ENCODE measurements at regions of chrX and their contacts with region 1.

Region 1: DNA sequence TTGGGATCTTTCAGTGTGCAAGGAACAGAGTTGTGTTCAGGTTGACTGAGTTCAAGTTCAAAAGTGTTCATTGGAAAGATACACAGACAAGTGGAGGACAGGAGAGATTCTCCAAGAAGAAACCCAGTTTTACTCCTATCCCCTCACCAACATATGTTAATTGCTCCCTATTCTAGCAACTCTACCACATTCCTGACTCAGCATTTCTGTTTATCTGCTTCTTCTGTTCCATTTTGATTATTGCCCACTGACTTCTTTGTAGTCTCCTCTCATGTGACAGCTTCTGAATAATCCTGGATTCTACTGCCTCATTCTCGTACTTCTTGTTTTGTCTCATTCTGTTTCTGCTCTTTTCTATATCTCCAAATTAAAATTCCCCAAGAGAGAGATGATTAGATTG is 15.8 kb upstream of the SPANXC start:
- DNase-seq: no peak
- H3K4me3 ChIP-seq: no peak overlapping the region
- H3K27ac ChIP-seq: no peak overlapping the region
- H3K4me1 ChIP-seq: no peaks in the 10 kb centered on the region
- H3K27me3 ChIP-seq: peaks cover 0 to 3% of the 10 kb centered on the region in 2 donors
- CTCF ChIP-seq: no peak
- POLR2A ChIP-seq: no peak

Region 2: DNA sequence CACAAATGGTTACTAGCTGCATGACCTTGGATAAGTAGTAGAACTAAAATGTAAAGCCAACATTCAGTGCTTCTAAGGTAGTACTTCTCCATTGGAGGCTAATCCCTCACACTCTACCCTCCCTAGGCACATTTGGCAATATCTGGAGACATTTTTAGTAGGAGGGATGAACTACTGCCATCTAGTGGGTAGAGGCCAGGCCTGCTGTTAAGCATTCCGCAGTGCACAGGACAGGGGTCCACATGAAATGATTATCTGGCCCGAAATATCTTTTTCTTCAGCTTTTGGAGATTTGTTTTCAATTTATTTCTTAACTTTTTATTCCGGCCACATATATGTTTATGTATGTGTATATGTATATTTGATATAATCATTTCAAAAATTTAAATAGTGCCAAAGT is 20.2 kb after region 1 on chrX:
- intact Hi-C with region 1: loop called (anchors 2 kb)
- DNase-seq: no peak
- H3K4me3 ChIP-seq: no peak overlapping the region
- H3K27ac ChIP-seq: no peak overlapping the region
- H3K4me1 ChIP-seq: no peaks in the 10 kb centered on the region
- H3K27me3 ChIP-seq: peaks cover 0 to 3% of the 10 kb centered on the region in 2 donors
- CTCF ChIP-seq: peak in 2 of 3 donors; percentile 28 to 31
- POLR2A ChIP-seq: no peak

Region 3: DNA sequence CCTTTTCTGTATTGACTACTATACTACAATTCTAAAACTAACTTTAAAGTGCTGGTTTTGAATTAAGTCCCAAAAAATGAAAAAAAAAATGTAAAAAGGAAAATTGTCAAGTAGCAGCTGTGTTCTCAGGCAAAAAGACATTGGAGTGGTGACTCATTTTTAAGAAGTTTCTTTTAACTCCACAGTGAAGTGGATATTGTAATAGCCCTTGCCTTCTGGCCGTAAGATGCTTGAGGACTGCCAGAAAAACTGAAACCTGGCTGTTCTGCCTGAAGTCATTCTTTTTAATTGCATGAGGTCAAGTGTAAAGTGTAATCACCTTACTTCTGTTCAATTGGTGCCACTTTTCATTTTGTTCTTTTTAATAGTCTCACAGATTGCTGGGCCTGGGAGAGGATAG is 411.6 kb after region 1 on chrX:
- intact Hi-C with region 1: no loop called
- DNase-seq: no peak
- H3K4me3 ChIP-seq: no peak overlapping the region
- H3K27ac ChIP-seq: no peak overlapping the region
- H3K4me1 ChIP-seq: no peaks in the 10 kb centered on the region
- H3K27me3 ChIP-seq: no peaks in the 10 kb centered on the region
- CTCF ChIP-seq: no peak
- POLR2A ChIP-seq: no peak

Region 4: GRCh38 chrX:142671036-142671435 is 1413.0 kb after region 1 on chrX:
- intact Hi-C with region 1: no loop called
- DNase-seq: no peak
- H3K4me3 ChIP-seq: no peak overlapping the region
- H3K27ac ChIP-seq: no peak overlapping the region
- H3K4me1 ChIP-seq: no peaks in the 10 kb centered on the region
- H3K27me3 ChIP-seq: no peaks in the 10 kb centered on the region
- CTCF ChIP-seq: no peak
- POLR2A ChIP-seq: no peak